ENCODE measurements at regions of chr15 and their contacts with region 1.

Region 1: GRCh38 chr15:78241007-78241406 is 6.6 kb upstream of the ACSBG1 start:
- DNase-seq: peak; percentile 95
- ATAC-seq: peak; percentile 76
- H3K4me3 Mint-ChIP-seq: no peak overlapping the region
- H3K27ac Mint-ChIP-seq: no peak overlapping the region
- H3K4me1 Mint-ChIP-seq: peaks cover 32% of the 10 kb centered on the region
- H3K27me3 Mint-ChIP-seq: no peaks in the 10 kb centered on the region; the same call in 1 of the 2 replicates
- CTCF ChIP-seq: peak; percentile 83

Region 2: DNA sequence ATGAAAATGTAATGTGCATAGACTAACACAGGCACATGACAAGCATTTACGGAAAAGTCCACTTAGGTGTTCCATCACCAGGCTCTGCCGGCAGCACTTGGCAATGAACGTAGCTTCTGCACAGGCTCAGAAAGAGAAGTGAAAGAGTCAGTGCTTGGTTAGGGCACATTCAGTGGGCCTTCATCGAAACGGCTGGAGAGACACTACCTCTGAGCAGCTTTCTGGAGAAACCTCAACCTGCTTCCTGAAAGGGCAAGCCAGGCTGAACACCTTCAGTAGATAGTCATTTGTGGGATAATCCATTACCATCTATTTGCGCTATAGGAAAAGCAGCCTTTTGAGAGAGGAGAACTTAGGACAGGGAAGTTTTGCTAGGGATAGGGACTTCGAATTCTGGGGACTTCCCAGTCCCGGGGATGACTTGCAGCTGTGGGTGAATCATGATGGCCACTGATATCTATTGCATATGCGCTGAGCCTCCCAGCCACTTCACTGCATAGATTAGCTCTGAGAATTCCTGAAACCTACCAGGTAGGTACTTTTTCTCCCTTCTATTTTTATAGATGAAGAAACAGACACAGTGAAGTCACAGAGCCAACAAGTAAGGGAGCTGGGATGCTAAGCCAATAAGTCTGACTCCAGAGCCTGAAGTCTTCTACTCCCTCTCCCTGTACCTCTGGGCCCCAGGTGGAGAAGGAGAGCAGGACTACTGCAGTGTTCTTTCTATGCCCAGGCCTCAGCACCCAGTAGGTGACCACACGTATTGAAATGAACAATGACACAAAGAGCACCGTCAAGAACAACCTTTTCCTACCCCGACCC is 152.8 kb before region 1 on chr15:
- CTCF ChIA-PET with region 1: no interaction called
- POLR2A ChIA-PET with region 1: no interaction called
- DNase-seq: no peak
- ATAC-seq: no peak
- H3K4me3 Mint-ChIP-seq: no peak overlapping the region
- H3K27ac Mint-ChIP-seq: no peak overlapping the region
- H3K4me1 Mint-ChIP-seq: no peaks in the 10 kb centered on the region
- H3K27me3 Mint-ChIP-seq: peaks cover 25% of the 10 kb centered on the region
- CTCF ChIP-seq: no peak

Region 3: DNA sequence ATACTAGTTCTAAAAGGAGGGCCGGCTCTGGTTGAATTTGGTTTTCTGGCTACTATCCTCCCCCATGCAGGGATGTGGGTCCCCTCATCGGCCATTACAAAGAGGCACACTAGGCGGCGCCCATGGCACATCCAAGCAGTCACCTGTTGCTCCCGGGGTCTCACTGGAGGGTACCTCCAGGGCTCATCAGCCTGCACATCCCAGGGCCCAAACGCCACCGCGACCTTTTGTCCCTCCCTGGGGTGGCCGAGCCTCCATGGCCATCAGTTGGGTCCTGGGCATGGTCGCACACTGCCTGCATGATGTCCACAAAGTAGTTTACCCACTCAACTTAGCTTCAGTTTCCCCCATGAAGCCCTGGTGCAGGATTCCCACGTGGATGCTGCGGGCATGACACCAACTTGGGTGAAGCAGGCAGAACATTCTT is 63.5 kb before region 1 on chr15:
- CTCF ChIA-PET with region 1: interaction called, 21 read pairs
- POLR2A ChIA-PET with region 1: interaction called, 3 read pairs
- DNase-seq: peak; percentile 87
- ATAC-seq: peak; percentile 97
- H3K4me3 Mint-ChIP-seq: no peak overlapping the region
- H3K27ac Mint-ChIP-seq: no peak overlapping the region
- H3K4me1 Mint-ChIP-seq: peaks cover under 1% of the 10 kb centered on the region; the same call in 1 of the 2 replicates
- H3K27me3 Mint-ChIP-seq: no peaks in the 10 kb centered on the region
- CTCF ChIP-seq: peak; percentile 70

Region 4: GRCh38 chr15:78204351-78205309 is 36.4 kb before region 1 on chr15:
- CTCF ChIA-PET with region 1: interaction called, 10 read pairs
- POLR2A ChIA-PET with region 1: no interaction called
- DNase-seq: no peak
- ATAC-seq: no peak
- H3K4me3 Mint-ChIP-seq: no peak overlapping the region
- H3K27ac Mint-ChIP-seq: no peak overlapping the region
- H3K4me1 Mint-ChIP-seq: peaks cover 6% of the 10 kb centered on the region
- H3K27me3 Mint-ChIP-seq: no peaks in the 10 kb centered on the region
- CTCF ChIP-seq: no peak

Region 5: DNA sequence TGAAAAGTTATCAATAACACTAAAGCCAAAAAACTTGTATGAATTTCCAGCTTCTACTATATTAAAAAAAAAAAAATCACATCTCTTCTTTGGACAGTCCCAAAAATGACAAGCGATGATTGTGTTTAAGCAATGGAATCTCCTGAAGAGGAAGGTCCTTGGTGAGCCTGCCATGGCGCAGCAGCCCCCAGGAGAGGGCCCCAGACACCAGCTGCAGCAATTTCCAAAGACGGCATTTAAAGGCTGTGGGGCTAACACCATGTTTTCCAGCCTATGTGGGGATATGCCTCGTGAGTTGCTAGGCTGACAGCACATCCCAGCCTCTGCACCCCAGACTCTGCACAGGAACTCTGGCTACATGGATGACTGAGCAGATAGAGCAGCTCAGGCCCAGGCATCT is 43.8 kb after region 1 on chr15:
- CTCF ChIA-PET with region 1: no interaction called
- POLR2A ChIA-PET with region 1: no interaction called
- DNase-seq: no peak
- ATAC-seq: peak; percentile 57
- H3K4me3 Mint-ChIP-seq: no peak overlapping the region
- H3K27ac Mint-ChIP-seq: no peak overlapping the region
- H3K4me1 Mint-ChIP-seq: no peaks in the 10 kb centered on the region
- H3K27me3 Mint-ChIP-seq: no peaks in the 10 kb centered on the region
- CTCF ChIP-seq: no peak

Region 6: GRCh38 chr15:78457101-78457500 is 216.1 kb after region 1 on chr15:
- CTCF ChIA-PET with region 1: no interaction called
- POLR2A ChIA-PET with region 1: no interaction called
- DNase-seq: no peak
- ATAC-seq: no peak
- H3K4me3 Mint-ChIP-seq: no peak overlapping the region
- H3K27ac Mint-ChIP-seq: peak overlapping the region; percentile 77
- H3K4me1 Mint-ChIP-seq: peaks cover 68% of the 10 kb centered on the region
- H3K27me3 Mint-ChIP-seq: no peaks in the 10 kb centered on the region
- CTCF ChIP-seq: no peak

Measured in WTC11 (cell line).